Stomach (tissue), 19 donors: ENCODE measurements at regions of chr5 and their contacts with region 1.

Region 1: DNA sequence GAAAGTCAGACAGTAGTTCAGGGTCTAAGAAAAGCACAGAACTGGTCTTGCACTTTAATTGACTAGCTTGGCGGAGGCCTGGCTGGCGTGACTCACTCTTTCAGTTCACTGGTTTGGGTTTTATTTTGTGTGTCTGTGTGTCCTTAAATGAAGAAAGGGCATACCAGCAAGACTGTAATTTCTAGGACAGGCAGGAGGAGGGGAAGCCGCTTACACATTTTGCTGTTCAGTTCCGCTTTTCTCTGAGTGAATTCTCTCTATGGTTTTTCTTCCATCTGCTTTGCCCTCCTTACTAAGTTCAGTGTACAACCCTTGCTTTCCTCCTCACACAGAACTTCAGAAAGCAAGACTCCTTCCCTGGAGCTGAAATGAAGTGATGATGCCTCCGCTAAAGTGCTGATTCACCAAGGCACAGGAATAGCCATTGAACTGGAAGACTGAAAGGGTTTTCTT is 150.8 kb downstream of the MEF2C start:
- DNase-seq: peak in 1 of 2 donors; percentile 32
- H3K4me3 ChIP-seq: no peak overlapping the region
- H3K27ac ChIP-seq: peak overlapping the region in 4 of 5 donors; percentile 26 to 63 (median 48)
- H3K4me1 ChIP-seq: peaks cover 0 to 23% (median 3%) of the 10 kb centered on the region in 4 donors
- H3K27me3 ChIP-seq: no peaks in the 10 kb centered on the region
- CTCF ChIP-seq: no peak
- EP300 ChIP-seq: no peak
- POLR2A ChIP-seq: no peak

Region 2: DNA sequence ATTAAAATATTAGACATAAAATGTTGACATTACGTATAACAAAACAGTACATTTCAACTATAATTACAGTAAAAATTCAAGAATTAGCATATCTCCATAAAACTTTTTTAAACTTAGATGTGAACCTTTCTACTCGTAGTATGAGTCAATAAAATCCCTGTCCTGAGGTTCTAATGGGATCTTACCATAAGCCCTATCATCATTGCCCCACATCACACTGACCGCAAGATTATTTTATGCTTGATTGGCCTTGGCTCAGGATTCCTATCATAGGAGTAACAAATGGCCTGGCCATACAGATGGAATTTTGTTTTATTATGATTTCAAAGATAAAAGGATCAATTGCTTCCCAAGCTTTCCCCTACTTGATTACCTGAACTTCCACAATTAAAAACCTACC is 87.5 kb before region 1 on chr5:
- intact Hi-C with region 1: no loop called
- DNase-seq: no peak
- H3K4me3 ChIP-seq: no peak overlapping the region
- H3K27ac ChIP-seq: no peak overlapping the region
- H3K4me1 ChIP-seq: no peaks in the 10 kb centered on the region
- H3K27me3 ChIP-seq: peaks cover 0 to 19% (median 2%) of the 10 kb centered on the region in 3 donors
- CTCF ChIP-seq: no peak
- EP300 ChIP-seq: no peak
- POLR2A ChIP-seq: no peak

Region 3: DNA sequence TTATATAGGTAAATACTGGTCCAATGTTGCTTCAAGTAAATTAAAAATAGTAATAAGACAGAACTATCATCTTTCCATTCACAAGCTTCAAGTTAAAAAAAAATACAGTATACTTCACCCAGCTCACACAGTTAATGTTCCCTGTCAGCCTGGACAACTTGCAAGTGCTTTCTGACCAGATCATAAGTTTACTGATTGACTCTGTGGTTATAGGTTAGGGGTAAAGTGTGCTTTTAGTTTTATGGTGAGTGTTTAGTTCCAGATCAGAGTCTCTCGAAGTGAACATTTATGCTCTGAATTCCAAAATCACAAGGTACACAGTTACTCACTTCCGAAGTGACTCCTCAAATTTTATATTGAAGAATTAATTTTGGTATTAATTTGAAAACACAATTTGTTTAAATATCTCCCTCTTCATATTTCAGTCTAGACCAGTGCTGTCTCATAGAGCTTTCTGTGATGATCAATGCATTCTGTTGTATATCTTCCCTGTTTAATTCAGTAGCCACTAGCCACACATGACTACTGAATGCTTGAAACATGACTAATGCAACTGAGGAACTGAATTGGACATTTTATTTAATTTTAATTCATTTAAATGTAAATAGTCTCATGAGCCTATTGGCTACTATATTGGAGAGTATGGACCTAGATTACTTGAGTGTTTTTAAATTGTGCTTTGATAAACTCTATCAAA is 60.1 kb after region 1 on chr5:
- intact Hi-C with region 1: no loop called
- DNase-seq: no peak
- H3K4me3 ChIP-seq: no peak overlapping the region
- H3K27ac ChIP-seq: no peak overlapping the region
- H3K4me1 ChIP-seq: no peaks in the 10 kb centered on the region
- H3K27me3 ChIP-seq: no peaks in the 10 kb centered on the region
- CTCF ChIP-seq: no peak
- EP300 ChIP-seq: no peak
- POLR2A ChIP-seq: no peak

Region 4: DNA sequence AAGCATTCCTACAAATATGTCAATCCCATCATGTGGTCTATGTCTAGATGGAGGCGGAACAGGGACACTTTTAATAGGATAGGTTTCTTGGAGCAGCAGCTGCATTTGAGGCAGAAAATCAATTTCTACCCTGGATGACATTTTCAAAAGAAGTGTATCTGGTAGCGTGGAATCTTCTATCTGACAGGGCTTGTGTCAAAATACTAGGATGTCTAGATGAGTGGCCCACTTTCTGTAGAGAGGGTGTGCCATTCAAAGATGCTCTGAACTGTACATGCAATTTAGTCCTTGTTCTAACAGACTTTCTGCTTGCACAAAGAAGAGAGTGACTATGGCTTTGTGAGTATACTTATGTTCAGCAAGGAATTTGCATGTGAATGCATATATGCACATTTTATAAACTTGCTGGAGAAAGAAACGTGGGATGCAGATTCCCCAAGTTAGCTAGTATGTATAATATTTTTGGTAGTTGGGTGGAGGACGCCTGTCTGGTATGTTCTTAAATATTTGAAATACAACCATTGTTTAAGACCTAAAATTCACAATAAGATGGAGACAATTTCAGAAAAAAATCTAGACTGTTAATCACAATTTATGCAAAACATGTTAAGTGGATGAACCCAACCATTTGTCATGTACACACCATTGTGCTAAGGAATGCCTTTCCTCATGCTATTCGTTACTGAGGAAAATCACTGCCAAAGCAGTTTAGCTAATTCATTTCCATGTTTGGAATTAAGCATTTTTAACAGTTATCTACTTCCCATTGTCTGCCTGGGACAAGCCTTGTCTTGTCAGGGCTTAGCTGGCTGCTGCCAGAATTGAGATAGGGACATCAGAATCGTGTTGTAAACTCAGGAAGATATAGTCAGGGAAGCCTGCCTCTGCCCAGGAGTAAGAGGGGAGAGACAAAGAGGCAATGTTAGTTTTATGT is 279.8 kb after region 1 on chr5:
- intact Hi-C with region 1: no loop called
- DNase-seq: no peak
- H3K4me3 ChIP-seq: no peak overlapping the region
- H3K27ac ChIP-seq: no peak overlapping the region
- H3K4me1 ChIP-seq: no peaks in the 10 kb centered on the region
- H3K27me3 ChIP-seq: no peaks in the 10 kb centered on the region
- CTCF ChIP-seq: no peak
- EP300 ChIP-seq: no peak
- POLR2A ChIP-seq: no peak

Region 5: DNA sequence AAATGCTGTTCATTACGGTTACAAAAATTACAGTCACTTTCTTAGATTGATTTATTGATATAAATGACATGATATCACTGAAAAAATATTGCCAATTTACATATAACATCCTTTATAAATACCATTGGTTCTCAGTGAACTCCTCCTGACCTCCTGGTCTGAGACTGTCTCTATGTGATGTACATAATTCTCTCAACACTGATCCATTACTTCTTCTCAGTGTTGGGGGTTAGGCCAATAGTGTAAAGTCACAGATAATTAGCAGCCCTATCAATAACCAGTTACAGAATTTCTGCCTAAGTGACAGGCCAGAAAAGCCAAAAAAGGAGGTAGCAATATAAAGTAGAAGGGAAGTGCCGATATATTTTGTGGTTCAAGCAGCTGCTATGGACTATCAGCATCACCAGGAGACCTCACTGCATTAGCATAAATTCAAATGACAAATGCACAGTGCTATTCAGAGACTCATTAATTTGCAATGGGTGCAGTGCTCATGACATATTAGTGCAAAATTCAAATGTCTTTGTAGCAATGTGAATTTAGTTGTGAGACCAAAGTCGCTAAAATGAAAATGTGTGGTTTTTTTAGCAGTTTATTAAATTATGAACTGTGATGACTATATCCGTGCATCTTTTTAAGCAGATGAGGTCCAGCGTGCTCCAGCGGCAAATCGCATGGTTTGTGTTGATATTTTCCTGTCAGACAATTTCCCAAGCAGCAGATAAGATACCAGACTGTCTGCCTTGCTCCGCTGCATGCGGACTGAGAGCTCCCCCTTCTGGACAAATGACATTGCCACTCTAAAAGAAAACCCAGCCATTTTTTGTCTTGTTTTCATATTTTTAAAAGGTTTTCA is 1532.7 kb after region 1 on chr5:
- intact Hi-C with region 1: loop called (anchors 10 kb)
- DNase-seq: peak; percentile 44 to 86
- H3K4me3 ChIP-seq: no peak overlapping the region
- H3K27ac ChIP-seq: no peak overlapping the region
- H3K4me1 ChIP-seq: peaks cover 0 to 5% (median 2%) of the 10 kb centered on the region in 4 donors
- H3K27me3 ChIP-seq: no peaks in the 10 kb centered on the region
- CTCF ChIP-seq: peak in 4 of 7 experiments; percentile 52 to 81 (median 75)
- EP300 ChIP-seq: no peak
- POLR2A ChIP-seq: no peak